ENCODE measurements at regions of chr2 and their contacts with region 1.

Region 1: GRCh38 chr2:135052042-135052876 is at the start of gene RAB3GAP1:
- DNase-seq: peak; percentile 97
- H3K4me3 Mint-ChIP-seq: peak within 1 kb of the TSS; percentile 98
- H3K27ac Mint-ChIP-seq: peak within 1 kb of the TSS; percentile 100
- H3K4me1 Mint-ChIP-seq: peaks cover 39% of the 10 kb centered on the region
- H3K27me3 Mint-ChIP-seq: no peaks in the 10 kb centered on the region
- total RNA-seq, gene RAB3GAP1: 29.6 to 30.7 TPM

Region 2: DNA sequence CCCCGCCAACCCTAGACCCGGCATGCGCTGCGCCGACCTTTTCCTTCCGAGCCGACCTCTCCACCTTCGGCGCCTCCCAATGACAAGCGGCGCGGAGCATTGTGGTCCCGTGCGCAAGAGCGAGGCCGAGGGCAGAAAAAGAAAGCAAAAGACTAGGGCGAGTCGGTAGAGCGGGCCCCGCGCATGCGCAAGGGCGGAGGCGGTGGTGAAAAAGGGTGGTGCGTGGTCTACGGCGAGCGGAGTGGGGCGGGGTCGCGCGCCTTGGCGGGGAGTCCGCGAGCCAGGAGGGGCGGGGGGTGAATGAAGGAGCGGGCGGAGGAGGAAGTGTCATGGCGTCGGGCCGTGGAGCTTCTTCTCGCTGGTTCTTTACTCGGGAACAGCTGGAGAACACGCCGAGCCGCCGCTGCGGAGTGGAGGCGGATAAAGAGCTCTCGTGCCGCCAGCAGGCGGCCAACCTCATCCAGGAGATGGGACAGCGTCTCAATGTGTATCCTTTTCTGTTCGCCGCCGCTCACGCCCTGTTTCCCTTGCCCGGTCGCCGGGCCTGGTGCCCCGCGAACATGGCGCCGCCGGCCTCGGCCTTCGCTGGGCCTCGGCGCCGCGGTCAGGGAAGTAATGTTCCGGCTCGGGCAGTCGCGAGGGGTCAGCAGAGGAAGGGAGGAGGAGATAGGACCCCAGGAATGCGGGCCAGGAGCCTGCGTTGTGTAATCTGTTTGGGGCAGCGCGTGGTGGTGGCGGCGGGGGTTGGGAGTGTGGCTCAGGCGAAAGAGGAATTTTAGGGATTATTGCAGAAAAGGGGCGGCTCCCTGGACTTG is 133.5 kb before region 1 on chr2 and contains the start of gene CCNT2:
- CTCF ChIA-PET with region 1: no interaction called
- POLR2A ChIA-PET with region 1: interaction called, 3 read pairs
- intact Hi-C with region 1: loop called (anchors 1 kb)
- DNase-seq: peak; percentile 100
- H3K4me3 Mint-ChIP-seq: peak within 1 kb of the TSS; percentile 90
- H3K27ac Mint-ChIP-seq: peak within 1 kb of the TSS; percentile 97
- H3K4me1 Mint-ChIP-seq: peaks cover 35% of the 10 kb centered on the region
- H3K27me3 Mint-ChIP-seq: peaks cover 5% of the 10 kb centered on the region
- total RNA-seq, gene CCNT2: 25.1 to 25.7 TPM

Region 3: DNA sequence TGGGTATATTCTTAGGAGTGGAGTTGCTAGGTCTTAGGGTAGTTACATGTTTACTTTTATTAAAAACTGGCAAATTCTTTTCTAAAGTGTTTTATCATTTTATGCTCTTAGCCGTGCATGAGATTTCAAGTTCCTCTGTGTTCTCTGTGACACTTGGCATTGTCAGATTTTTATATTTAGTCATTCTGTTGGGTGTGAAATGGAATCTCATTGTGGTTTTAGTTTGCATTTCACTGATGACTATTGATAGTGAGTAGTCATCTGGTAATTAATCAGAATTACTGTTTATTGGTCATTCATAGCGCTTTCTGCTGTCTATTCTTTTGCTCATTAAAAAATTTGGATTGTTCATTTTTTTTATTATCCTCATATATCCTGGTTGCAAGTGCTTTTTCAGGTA is 34.0 kb after region 1 on chr2:
- CTCF ChIA-PET with region 1: no interaction called
- POLR2A ChIA-PET with region 1: no interaction called
- intact Hi-C with region 1: loop called (anchors 2 kb)
- DNase-seq: no peak
- H3K4me3 Mint-ChIP-seq: no peak overlapping the region
- H3K27ac Mint-ChIP-seq: no peak overlapping the region
- H3K4me1 Mint-ChIP-seq: peaks cover 23% of the 10 kb centered on the region
- H3K27me3 Mint-ChIP-seq: no peaks in the 10 kb centered on the region

Region 4: GRCh38 chr2:135531231-135532228 is 479.3 kb after region 1 on chr2 and contains the start of gene R3HDM1:
- CTCF ChIA-PET with region 1: interaction called, 3 read pairs
- POLR2A ChIA-PET with region 1: interaction called, 7 read pairs
- intact Hi-C with region 1: loop called (anchors 1 kb)
- DNase-seq: peak; percentile 97
- H3K4me3 Mint-ChIP-seq: no peak within 1 kb of the TSS
- H3K27ac Mint-ChIP-seq: peak within 1 kb of the TSS; percentile 71
- H3K4me1 Mint-ChIP-seq: peaks cover 29% of the 10 kb centered on the region
- H3K27me3 Mint-ChIP-seq: no peaks in the 10 kb centered on the region
- total RNA-seq, gene R3HDM1: 49.3 to 56.3 TPM

Region 5: DNA sequence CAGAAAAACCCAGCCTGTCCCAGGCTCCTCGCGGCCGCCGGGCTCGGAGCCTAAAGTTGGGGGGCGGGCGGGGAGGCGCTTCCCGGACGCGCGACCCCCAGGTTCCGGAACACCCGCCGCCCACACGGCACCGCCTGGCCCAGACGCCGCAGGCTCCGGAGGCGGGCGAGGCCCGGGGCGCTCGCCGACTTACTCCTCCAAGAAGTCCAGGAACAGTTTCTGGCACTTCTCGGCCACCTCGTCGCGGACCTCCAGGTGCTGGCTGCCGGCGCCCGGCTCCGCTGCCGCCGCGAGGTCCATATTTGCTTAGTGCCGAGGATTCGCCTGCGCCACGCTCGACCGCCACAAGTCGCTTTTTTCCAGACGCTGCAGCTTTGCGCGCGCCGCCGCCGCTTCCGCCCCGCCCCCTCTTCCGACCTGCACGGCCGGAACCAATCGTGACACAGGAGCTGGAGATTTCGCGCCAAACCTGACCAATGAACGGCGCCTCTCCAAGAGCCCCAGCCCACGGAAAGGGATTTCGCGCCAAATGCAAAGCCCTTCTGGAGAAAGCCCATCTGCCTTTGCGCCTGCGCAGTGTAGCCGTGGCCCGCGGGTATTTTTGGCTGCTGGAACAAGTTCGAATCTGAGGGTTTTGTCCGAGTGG is 823.9 kb after region 1 on chr2 and contains the start of gene MCM6:
- CTCF ChIA-PET with region 1: no interaction called
- POLR2A ChIA-PET with region 1: no interaction called
- intact Hi-C with region 1: loop called (anchors 2 kb)
- DNase-seq: peak; percentile 100
- H3K4me3 Mint-ChIP-seq: peak within 1 kb of the TSS; percentile 90
- H3K27ac Mint-ChIP-seq: peak within 1 kb of the TSS; percentile 98
- H3K4me1 Mint-ChIP-seq: peaks cover 39% of the 10 kb centered on the region
- H3K27me3 Mint-ChIP-seq: peaks cover 2% of the 10 kb centered on the region
- total RNA-seq, gene MCM6: 280 to 284 TPM